ENCODE measurements at regions of chr15 and their contacts with region 1.

Region 1: DNA sequence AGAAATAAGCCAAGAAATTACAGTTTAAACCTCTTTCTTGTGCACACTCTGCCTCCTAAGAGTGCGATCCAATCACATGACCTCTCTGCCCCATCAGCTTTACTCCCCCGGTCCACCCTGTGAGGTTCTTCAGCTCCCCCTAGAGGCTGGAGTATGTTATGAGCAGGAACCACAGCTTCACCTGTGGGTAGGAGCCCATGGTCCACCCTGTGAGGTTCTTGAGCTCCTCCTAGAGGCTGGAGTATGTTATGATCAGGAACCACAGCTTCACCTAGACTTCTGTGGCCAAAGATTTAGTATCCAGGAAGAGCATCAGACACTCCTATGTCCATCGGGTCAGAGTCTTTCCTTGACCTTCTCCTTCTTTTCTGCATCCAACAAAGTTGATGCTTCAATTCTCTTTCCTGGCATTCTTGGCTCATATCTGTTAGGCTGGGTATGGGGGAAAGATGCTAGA is 163.9 kb downstream of the MINAR1 start:
- DNase-seq: peak; percentile 84
- H3K4me3 ChIP-seq: peak overlapping the region in 1 of 2 experiments; percentile 17; a peak in 1 of 4 replicates
- H3K27ac ChIP-seq: no peak overlapping the region
- H3K4me1 ChIP-seq: no peaks in the 10 kb centered on the region
- H3K27me3 ChIP-seq: no peaks in the 10 kb centered on the region
- CTCF ChIP-seq: peak; percentile 71
- EP300 ChIP-seq: no peak
- RAD21 ChIP-seq: peak; percentile 88

Region 2: GRCh38 chr15:79582650-79583049 is 13.4 kb before region 1 on chr15:
- CTCF ChIA-PET with region 1: interaction called, 14 read pairs
- POLR2A ChIA-PET with region 1: no interaction called
- DNase-seq: no peak
- H3K4me3 ChIP-seq: no peak overlapping the region
- H3K27ac ChIP-seq: no peak overlapping the region
- H3K4me1 ChIP-seq: no peaks in the 10 kb centered on the region
- H3K27me3 ChIP-seq: no peaks in the 10 kb centered on the region
- CTCF ChIP-seq: no peak
- EP300 ChIP-seq: no peak
- RAD21 ChIP-seq: no peak

Region 3: DNA sequence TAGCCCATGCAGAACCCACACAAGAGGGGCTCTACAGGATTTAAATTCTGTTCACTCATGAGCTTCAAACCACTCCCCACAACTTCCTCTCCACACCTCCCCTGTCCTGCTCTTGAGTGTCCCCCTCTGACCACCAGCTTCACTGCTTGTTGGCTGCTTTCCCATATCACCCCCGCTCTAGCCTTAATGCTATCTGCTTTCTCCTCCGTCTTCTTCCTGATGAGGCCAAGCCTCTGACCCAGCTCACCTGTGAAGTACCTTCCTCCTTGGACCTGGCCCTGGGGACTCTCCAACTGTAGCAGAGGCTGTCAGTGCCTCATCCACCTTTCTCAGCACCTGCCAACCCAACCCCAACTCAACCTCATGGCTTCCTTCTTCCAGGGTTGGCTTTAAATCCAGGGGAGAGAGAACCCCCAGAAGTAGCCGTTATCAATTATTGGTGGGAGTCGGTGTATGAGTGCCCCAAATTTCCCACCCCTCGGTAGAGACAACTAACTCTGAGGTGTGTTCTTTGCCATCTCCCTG is 10.8 kb after region 1 on chr15:
- CTCF ChIA-PET with region 1: interaction called, 12 read pairs
- POLR2A ChIA-PET with region 1: no interaction called
- DNase-seq: no peak
- H3K4me3 ChIP-seq: no peak overlapping the region
- H3K27ac ChIP-seq: no peak overlapping the region
- H3K4me1 ChIP-seq: peaks cover 0 to 8% of the 10 kb centered on the region in 2 experiments; a peak in 1 of 4 replicates
- H3K27me3 ChIP-seq: no peaks in the 10 kb centered on the region
- CTCF ChIP-seq: no peak
- EP300 ChIP-seq: no peak
- RAD21 ChIP-seq: no peak

Region 4: GRCh38 chr15:80275934-80276333 is 679.9 kb after region 1 on chr15:
- CTCF ChIA-PET with region 1: no interaction called
- POLR2A ChIA-PET with region 1: no interaction called
- DNase-seq: no peak
- H3K4me3 ChIP-seq: no peak overlapping the region
- H3K27ac ChIP-seq: no peak overlapping the region
- H3K4me1 ChIP-seq: no peaks in the 10 kb centered on the region
- H3K27me3 ChIP-seq: 0 out of 2 replicates have a peak, but pooled peaks cover under 1% of the 10 kb centered on the region
- CTCF ChIP-seq: no peak
- EP300 ChIP-seq: no peak
- RAD21 ChIP-seq: no peak